KBM-7 (cell line): ENCODE measurements at regions of chr1 and their contacts with region 1.

Region 1: GRCh38 chr1:165914136-165914798 is 86.9 kb downstream of the UCK2 start:
- DNase-seq: peak; percentile 78

Region 2: GRCh38 chr1:165392634-165393571 is 521.4 kb before region 1 on chr1:
- in situ Hi-C with region 1: loop called (anchors 25 kb)
- DNase-seq: peak; percentile 98

Region 3: GRCh38 chr1:165600793-165601192 is 313.5 kb before region 1 on chr1:
- in situ Hi-C with region 1: loop called (anchors 25 kb)
- DNase-seq: no peak